Posterior vena cava (tissue), 2 donors: ENCODE measurements at regions of chr13 and their contacts with region 1.

Region 1: GRCh38 chr13:21476893-21477472 is 17.9 kb upstream of the ZDHHC20 start:
- DNase-seq: peak; percentile 93

Region 2: DNA sequence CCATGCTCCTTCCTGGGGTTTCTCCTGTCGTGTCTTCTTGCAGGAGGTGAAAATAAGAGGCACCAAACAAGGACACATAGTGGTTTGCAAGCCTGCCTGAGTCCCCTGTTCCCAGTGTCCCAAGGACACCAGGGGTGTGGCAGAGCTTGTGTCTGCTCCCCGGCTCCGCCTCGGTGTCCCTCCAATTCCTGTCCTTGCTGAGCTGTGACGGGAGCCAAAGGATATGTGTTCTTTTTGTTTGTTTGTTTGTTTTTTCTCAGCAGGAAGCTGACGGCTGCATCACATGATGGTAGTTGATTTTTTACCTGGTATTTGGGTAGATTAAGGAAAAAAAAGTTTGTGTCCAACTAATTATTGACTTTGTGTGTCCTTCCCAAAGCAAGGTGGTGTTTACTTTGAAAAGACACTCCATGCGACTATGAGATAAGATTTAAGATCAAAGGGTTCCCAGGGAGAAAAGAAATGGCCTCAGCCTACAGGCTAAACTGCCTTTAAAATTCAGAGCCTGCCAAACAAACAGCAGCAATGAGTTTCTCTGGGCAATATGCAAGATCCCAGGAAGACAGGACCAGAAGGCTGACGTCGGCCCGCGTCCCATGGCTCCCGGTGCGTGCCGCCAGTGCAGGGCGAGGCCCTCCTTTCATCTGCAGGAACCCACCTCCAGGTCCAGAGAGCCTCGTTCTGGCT is 523.6 kb before region 1 on chr13:
- intact Hi-C with region 1: loop called in 1 of 2 experiments (anchors 10 kb)
- DNase-seq: no peak

Region 3: DNA sequence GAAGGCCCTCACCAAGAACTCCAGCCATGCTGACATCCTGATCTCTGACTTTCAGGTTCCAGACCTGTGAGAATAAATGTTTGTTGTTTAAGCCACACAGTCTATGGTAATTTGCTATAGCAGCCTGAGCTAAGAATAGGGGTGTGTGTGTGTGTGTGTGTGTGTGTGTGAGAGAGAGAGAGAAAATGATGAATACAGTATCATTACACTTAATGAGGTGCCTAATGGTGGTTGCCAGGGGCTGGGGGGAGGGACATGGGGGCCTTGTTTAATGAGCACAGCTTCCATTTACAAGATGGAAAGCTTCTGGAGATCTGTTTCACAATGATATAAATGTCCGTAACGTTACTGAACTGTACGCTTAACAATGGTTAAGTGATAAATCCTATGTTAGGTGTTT is 361.8 kb before region 1 on chr13:
- intact Hi-C with region 1: loop called in 1 of 2 experiments (anchors 10 kb)
- DNase-seq: no peak

Region 4: DNA sequence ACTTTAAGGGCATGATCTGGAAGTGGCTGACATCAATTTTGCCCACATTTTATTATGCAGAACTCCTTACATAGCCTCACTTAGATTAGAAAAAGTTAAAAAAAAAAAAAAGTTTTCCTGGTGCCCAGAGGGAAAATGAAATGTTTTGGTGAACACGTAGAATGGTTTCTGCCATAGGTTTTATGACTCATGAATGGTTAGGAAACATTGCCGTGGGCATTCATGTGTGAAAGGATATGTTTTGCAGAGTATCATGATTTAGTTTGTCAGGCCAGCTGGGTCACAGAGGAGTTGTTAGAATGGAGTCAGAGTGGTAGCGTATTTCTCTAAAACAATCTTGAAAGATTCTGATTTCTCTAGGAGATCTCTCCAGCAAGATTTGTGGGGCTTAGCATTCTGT is 166.8 kb before region 1 on chr13:
- intact Hi-C with region 1: no loop called
- DNase-seq: no peak